SK-N-SH (cell line): ENCODE measurements at regions of chr11 and their contacts with region 1.

Region 1: GRCh38 chr11:35391922-35392813 is 27.2 kb downstream of the SLC1A2 start:
- DNase-seq: peak; percentile 84
- H3K4me3 ChIP-seq: peak overlapping the region in 1 of 2 experiments; percentile 10; a peak in 1 of 4 replicates
- H3K27ac ChIP-seq: no peak overlapping the region
- H3K4me1 ChIP-seq: peaks cover 5 to 28% of the 10 kb centered on the region in 2 experiments; a peak in 2 of 4 replicates
- H3K27me3 ChIP-seq: no peaks in the 10 kb centered on the region
- CTCF ChIP-seq: peak; percentile 98
- EP300 ChIP-seq: no peak
- RAD21 ChIP-seq: peak; percentile 99

Region 2: DNA sequence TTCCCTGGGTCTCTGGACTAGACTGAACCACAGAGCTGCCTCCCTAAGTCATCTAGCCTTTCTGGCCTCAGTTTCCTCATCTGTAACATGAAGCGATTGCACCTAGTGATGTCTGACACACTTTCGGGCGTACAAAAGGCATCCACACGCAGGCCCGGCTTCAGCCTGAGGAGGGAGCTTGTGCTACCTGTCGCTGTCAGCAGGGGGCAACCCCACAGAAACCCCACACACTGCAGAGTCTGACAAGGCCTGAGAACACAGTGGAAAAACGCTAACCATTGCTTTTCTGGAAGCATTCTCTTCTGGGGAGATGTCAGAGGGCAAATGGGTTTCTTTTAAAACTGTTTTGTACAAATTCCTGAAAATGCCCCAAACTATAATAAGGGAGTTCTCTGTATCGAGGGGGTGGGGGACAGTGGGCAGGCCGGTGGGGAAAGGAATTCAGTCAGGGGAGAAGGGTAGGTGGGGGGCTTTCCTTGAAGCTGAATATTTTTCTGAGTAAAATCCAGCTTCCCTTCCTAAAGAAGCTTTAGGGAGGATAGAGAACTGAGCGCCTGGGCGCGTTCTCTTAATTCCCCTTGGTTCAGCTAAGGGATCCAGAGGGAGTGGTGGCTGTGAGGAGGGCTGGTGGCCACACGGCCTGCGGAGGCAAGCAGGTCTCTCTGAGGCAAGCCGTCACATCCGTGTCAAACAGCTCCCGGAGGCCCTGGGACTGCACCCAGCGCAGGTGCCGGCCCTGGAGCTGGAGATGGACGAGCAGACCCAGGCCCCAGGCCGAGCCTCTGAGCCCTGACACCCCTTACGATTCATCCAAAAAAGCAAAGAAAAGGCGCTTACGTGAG is 879.1 kb before region 1 on chr11:
- CTCF ChIA-PET with region 1: interaction called, 10 read pairs
- POLR2A ChIA-PET with region 1: no interaction called
- DNase-seq: peak; percentile 78
- H3K4me3 ChIP-seq: peak overlapping the region in 1 of 2 experiments; percentile 31; a peak in 1 of 4 replicates
- H3K27ac ChIP-seq: no peak overlapping the region
- H3K4me1 ChIP-seq: peaks cover 0 to 3% of the 10 kb centered on the region in 2 experiments; a peak in 2 of 4 replicates
- H3K27me3 ChIP-seq: no peaks in the 10 kb centered on the region; the same call in 1 of the 2 replicates
- CTCF ChIP-seq: peak; percentile 75
- EP300 ChIP-seq: no peak
- RAD21 ChIP-seq: peak; percentile 59

Region 3: GRCh38 chr11:34916015-34916842 is 475.9 kb before region 1 on chr11 and contains the starts of genes APIP and PDHX:
- CTCF ChIA-PET with region 1: interaction called, 31 read pairs
- POLR2A ChIA-PET with region 1: no interaction called
- DNase-seq: peak; percentile 98
- H3K4me3 ChIP-seq: peak within 1 kb of the TSS; percentile 65 to 97
- H3K27ac ChIP-seq: peak within 1 kb of the TSS; percentile 90 to 98
- H3K4me1 ChIP-seq: peaks cover 12 to 13% of the 10 kb centered on the region in 2 experiments; a peak in 3 of 4 replicates
- H3K27me3 ChIP-seq: no peaks in the 10 kb centered on the region
- CTCF ChIP-seq: no peak
- EP300 ChIP-seq: no peak
- RAD21 ChIP-seq: no peak
- polyA plus RNA-seq, gene APIP: 21.3 and 22.5 TPM in 2 replicates
- polyA plus RNA-seq, gene PDHX: 14.8 and 19.1 TPM in 2 replicates

Region 4: DNA sequence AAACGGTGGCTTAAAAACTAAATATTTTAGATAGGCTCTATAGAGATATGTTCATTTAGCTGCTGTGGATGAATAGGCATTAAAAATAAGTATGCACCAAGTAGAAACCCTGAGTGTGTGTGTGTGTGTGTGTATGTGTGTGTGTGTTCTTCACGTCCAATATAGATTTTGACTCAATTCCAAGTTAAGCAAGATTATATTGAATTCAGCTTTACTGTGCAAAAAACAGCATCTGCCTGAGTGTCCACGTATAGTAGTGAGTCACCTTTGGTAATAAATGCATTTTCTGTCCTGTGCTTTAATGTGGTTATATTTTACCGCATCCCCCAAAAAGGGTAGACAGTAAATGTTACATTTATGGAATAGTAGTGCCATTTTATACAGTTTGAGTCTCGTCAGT is 404.6 kb before region 1 on chr11:
- CTCF ChIA-PET with region 1: no interaction called
- POLR2A ChIA-PET with region 1: no interaction called
- DNase-seq: no peak
- H3K4me3 ChIP-seq: no peak overlapping the region
- H3K27ac ChIP-seq: peak overlapping the region in 1 of 2 experiments; percentile 64; a peak in 3 of 4 replicates
- H3K4me1 ChIP-seq: peaks cover 0 to 10% of the 10 kb centered on the region in 2 experiments; a peak in 3 of 4 replicates
- H3K27me3 ChIP-seq: no peaks in the 10 kb centered on the region
- CTCF ChIP-seq: no peak
- EP300 ChIP-seq: no peak
- RAD21 ChIP-seq: no peak

Region 5: DNA sequence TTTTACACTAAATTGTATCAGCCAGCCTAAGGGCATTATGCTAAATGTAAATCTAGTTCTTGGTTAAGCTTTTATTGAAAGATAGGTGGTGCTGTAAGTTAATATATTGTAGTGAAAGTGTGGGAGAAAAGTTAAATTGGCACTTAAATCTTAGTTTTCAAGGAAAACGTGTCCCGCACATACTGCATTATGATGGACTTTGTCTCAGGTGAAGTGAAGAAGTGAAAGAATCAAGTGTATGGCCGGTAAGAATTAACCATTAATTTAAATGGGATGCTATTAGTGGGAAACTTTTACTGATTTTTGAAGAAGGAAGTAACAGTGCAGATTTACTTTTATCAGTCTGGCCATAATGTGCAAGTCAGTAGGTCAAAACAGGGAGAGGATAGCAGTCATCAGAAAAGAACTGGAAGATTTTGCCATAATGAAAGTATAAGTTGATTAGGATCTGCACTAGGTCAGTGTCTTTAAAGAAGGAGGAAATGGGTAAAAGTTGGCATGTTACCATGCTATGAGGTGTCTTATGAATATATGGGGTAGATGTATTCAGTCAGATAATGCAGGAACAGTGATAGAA is 394.1 kb before region 1 on chr11:
- CTCF ChIA-PET with region 1: interaction called, 22 read pairs
- POLR2A ChIA-PET with region 1: no interaction called
- DNase-seq: peak; percentile 4
- H3K4me3 ChIP-seq: no peak overlapping the region; a peak in 1 of 4 replicates
- H3K27ac ChIP-seq: peak overlapping the region in 1 of 2 experiments; percentile 79; a peak in 2 of 4 replicates
- H3K4me1 ChIP-seq: peaks cover 0 to 16% of the 10 kb centered on the region in 2 experiments; a peak in 2 of 4 replicates
- H3K27me3 ChIP-seq: no peaks in the 10 kb centered on the region
- CTCF ChIP-seq: peak; percentile 74
- EP300 ChIP-seq: peak in 1 of 2 experiments; percentile 40; a peak in 1 of 4 replicates
- RAD21 ChIP-seq: peak; percentile 69

Region 6: GRCh38 chr11:35155677-35156076 is 236.5 kb before region 1 on chr11:
- CTCF ChIA-PET with region 1: no interaction called
- POLR2A ChIA-PET with region 1: no interaction called
- DNase-seq: no peak
- H3K4me3 ChIP-seq: no peak overlapping the region
- H3K27ac ChIP-seq: no peak overlapping the region
- H3K4me1 ChIP-seq: peaks cover 18 to 40% of the 10 kb centered on the region in 2 experiments
- H3K27me3 ChIP-seq: no peaks in the 10 kb centered on the region
- CTCF ChIP-seq: no peak
- EP300 ChIP-seq: no peak
- RAD21 ChIP-seq: no peak

Region 7: GRCh38 chr11:35260342-35260985 is 131.7 kb before region 1 on chr11:
- CTCF ChIA-PET with region 1: interaction called, 10 read pairs
- POLR2A ChIA-PET with region 1: no interaction called
- DNase-seq: no peak
- H3K4me3 ChIP-seq: no peak overlapping the region
- H3K27ac ChIP-seq: peak overlapping the region in 1 of 2 experiments; percentile 76; a peak in 2 of 4 replicates
- H3K4me1 ChIP-seq: peaks cover 0 to 6% of the 10 kb centered on the region in 2 experiments; a peak in 3 of 4 replicates
- H3K27me3 ChIP-seq: no peaks in the 10 kb centered on the region
- CTCF ChIP-seq: no peak
- EP300 ChIP-seq: 0 out of 4 replicates have a peak, but pooled peaks of 1 of the 2 experiments have one; percentile 34
- RAD21 ChIP-seq: no peak

Region 8: DNA sequence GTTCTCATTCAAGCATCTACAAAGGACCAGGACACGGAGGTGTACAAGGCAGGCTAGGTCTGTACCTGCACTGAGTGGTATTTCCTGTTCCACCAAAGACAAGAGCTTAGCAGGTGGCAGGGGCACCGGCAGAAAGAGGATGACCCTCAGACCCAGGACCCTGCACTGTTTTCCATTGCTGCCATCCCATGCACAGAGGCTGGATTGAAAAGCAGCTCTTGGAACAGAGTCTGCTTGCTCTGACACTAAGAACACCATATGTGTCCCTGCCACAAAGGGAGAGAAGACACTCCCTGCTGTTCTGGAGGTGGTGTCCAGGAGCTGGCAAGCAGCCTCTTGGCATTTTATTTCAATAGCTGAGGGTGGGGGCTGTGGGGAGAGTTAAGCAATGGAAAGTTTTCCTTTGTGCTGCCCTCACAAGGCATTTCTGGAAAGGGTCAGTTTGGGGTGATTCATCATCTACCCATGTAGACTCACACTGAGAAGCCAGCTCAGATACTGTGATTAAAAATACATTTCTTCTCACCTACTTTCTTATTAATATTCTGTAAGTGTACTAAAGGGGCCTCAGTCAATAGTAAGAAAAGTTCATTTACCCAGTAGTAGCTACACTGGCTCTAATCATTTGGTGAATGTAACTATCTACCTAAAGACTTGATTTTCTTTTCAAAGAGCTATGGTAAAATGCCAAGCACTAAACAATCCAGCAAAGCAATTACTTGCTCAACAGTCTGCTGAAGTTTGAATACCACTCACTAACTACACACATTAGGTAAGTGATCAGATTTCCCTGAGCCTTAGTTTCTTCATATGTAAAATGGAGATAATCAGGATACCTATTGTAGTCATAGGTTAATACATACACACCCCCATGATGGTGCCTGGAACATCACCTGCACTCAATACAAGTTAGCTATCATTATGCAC is 28.1 kb before region 1 on chr11:
- CTCF ChIA-PET with region 1: interaction called, 19 read pairs
- POLR2A ChIA-PET with region 1: no interaction called
- DNase-seq: no peak
- H3K4me3 ChIP-seq: no peak overlapping the region
- H3K27ac ChIP-seq: peak overlapping the region in 1 of 2 experiments; percentile 84; a peak in 2 of 4 replicates
- H3K4me1 ChIP-seq: peaks cover 3 to 8% of the 10 kb centered on the region in 2 experiments; a peak in 3 of 4 replicates
- H3K27me3 ChIP-seq: no peaks in the 10 kb centered on the region
- CTCF ChIP-seq: no peak
- EP300 ChIP-seq: peak in 1 of 2 experiments; percentile 88; a peak in 2 of 4 replicates
- RAD21 ChIP-seq: no peak

Region 9: DNA sequence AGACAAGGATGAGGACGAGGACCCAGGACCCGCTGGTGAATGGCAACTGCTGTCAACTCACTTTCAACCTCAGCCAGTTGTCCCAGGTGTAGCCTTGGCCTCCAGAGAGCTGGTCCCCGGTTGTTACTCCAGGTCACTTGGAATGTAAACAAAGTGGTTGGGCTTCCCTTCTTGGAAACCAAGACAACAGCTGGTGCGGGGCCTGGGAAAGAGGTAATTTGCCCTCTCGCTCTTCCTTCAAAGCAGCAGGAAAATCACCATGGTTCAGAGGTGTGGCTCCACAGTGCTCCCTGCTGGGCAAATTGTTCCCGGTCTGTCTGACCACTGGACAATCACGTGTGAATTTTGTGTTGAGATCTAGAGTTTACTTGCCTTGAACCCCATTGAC is 12.2 kb after region 1 on chr11:
- CTCF ChIA-PET with region 1: interaction called, 59 read pairs
- POLR2A ChIA-PET with region 1: no interaction called
- DNase-seq: peak; percentile 29
- H3K4me3 ChIP-seq: no peak overlapping the region; a peak in 1 of 4 replicates
- H3K27ac ChIP-seq: no peak overlapping the region
- H3K4me1 ChIP-seq: no peaks in the 10 kb centered on the region
- H3K27me3 ChIP-seq: no peaks in the 10 kb centered on the region
- CTCF ChIP-seq: peak; percentile 60
- EP300 ChIP-seq: no peak
- RAD21 ChIP-seq: peak; percentile 51

Region 10: GRCh38 chr11:35689081-35689996 is 297.2 kb after region 1 on chr11:
- CTCF ChIA-PET with region 1: no interaction called
- POLR2A ChIA-PET with region 1: no interaction called
- DNase-seq: no peak
- H3K4me3 ChIP-seq: no peak overlapping the region
- H3K27ac ChIP-seq: no peak overlapping the region
- H3K4me1 ChIP-seq: peaks cover 0 to 17% of the 10 kb centered on the region in 2 experiments; a peak in 1 of 4 replicates
- H3K27me3 ChIP-seq: no peaks in the 10 kb centered on the region
- CTCF ChIP-seq: no peak
- EP300 ChIP-seq: no peak
- RAD21 ChIP-seq: no peak